MCF 10A (cell line): ENCODE measurements at regions of chr1 and their contacts with region 1.

Region 1: DNA sequence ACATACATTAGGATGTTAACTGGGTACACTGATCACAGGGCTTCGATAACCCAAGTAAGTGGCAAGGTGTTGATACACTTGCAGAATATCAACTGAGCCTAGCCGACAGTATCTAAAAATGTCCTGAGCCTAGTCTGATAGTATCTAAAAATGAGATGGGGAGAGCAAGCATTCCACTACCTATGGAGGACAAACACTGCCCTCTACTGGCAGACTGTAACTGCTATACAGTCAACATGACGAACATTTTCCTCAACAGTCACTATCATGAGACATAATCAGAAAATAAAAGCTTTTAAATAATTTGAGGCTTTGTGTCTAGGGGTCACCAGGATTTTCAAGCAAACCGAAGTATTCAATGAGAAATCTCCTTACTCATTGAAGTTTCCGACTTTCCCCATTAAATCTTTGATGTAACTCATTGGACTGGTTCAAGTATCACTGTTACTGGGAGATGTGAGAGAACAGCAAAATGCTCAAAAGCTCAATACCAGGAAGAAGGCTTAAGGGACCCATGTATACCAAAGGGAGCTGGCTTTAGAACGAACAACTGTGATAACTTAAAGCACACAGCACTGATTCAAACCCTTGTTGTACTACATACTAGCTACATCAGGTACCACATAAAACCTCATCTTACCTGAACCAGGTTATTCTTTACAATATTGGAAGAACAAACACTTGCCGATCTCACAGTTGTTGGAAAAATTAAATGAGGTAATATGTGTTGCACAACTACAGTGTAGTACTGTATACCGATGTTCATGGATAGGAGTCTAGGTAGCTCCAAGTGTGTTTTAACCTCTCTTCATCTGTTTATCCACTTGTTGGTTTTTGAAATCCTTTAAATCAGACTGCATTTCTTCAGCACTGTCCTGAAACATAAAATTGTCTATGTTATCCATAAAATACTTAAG is 31.1 kb upstream of the SLC45A3 start:
- DNase-seq: peak; percentile 93
- H3K4me3 Mint-ChIP-seq: no peak overlapping the region
- H3K27ac Mint-ChIP-seq: no peak overlapping the region
- H3K4me1 Mint-ChIP-seq: peaks cover 30% of the 10 kb centered on the region
- H3K27me3 Mint-ChIP-seq: no peaks in the 10 kb centered on the region
- CTCF ChIP-seq: peak; percentile 97

Region 2: DNA sequence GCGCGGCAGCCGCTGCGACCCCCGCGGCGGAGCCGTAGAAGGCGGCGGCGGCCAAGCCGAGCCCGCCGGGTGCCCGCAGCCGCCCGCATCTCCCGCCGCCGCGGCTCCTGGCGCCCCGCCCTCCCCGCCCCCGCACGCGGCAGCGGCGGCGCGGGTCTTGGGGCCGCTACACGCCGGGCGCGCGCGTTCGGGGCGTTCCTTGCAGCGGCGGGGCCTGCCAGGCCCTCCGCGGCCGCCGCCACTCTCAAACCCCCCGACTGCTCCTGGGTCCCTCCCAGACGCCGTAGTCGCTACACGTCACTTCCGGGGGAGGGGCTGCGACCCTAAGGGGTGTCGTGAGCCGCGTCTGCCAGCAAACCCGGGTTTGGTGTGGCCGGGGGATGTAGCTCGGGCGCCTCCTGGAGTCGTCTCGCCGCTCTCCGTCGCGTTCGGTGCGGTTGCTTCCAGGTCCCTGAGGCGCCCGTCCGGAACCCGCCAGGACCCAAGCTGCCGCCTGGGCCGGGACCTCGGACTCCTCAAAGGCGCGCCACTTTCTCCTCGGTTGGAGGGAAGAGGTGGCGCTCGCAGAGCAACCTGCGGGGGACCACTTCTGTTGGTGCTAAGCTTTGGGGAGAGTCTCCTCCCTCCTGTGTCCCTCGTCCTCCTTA is 79.5 kb before region 1 on chr1 and contains the start of gene ELK4:
- CTCF ChIA-PET with region 1: interaction called, 8 read pairs
- POLR2A ChIA-PET with region 1: interaction called, 12 read pairs
- intact Hi-C with region 1: no loop called
- DNase-seq: peak; percentile 100
- H3K4me3 Mint-ChIP-seq: peak within 1 kb of the TSS; percentile 90
- H3K27ac Mint-ChIP-seq: peak within 1 kb of the TSS; percentile 91
- H3K4me1 Mint-ChIP-seq: peaks cover 35% of the 10 kb centered on the region
- H3K27me3 Mint-ChIP-seq: no peaks in the 10 kb centered on the region
- CTCF ChIP-seq: peak; percentile 87
- total RNA-seq, gene ELK4: 101 and 109 TPM in 2 replicates

Region 3: GRCh38 chr1:205680073-205680851 is 31.1 kb before region 1 on chr1 and contains the start of gene SLC45A3:
- CTCF ChIA-PET with region 1: interaction called, 69 read pairs
- POLR2A ChIA-PET with region 1: interaction called, 25 read pairs
- intact Hi-C with region 1: no loop called
- DNase-seq: no peak
- H3K4me3 Mint-ChIP-seq: peak within 1 kb of the TSS; percentile 76
- H3K27ac Mint-ChIP-seq: peak within 1 kb of the TSS; percentile 5
- H3K4me1 Mint-ChIP-seq: peaks cover 14% of the 10 kb centered on the region
- H3K27me3 Mint-ChIP-seq: no peaks in the 10 kb centered on the region
- CTCF ChIP-seq: no peak
- total RNA-seq, gene SLC45A3: 3.1 and 5.3 TPM in 2 replicates

Region 4: DNA sequence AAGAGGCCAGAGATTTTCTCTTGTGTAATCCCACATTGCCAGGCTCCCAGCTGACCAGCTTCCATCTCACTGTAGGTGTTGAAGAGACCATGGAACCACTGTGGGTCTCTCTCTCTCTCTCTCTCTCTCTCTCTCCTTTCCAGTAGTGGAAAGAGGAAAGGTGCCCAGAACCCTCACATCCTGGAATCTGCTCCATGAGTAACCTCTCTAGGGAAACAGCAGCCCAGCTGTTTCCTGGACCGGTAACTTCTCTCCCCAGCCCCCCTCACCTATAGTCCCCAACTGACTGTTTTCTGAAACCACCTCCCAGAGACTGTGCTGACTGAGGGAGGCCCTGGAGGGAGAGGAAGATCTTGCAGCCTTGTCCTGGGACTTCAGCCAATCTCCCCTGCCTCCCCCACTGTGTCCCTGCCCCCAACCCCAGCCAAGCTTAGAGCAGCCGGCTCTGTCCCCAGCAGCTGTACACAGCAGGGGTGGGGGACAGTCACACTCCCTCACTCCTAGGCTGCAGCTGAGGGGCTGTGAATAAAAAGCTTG is 10.4 kb before region 1 on chr1:
- CTCF ChIA-PET with region 1: interaction called, 129 read pairs
- POLR2A ChIA-PET with region 1: interaction called, 11 read pairs
- intact Hi-C with region 1: no loop called
- DNase-seq: peak; percentile 33
- H3K4me3 Mint-ChIP-seq: no peak overlapping the region
- H3K27ac Mint-ChIP-seq: no peak overlapping the region
- H3K4me1 Mint-ChIP-seq: peaks cover 6% of the 10 kb centered on the region
- H3K27me3 Mint-ChIP-seq: no peaks in the 10 kb centered on the region
- CTCF ChIP-seq: no peak

Region 5: GRCh38 chr1:205739348-205740160 is 28.2 kb after region 1 on chr1:
- CTCF ChIA-PET with region 1: interaction called, 23 read pairs
- POLR2A ChIA-PET with region 1: interaction called, 9 read pairs
- intact Hi-C with region 1: no loop called
- DNase-seq: peak; percentile 85
- H3K4me3 Mint-ChIP-seq: no peak overlapping the region
- H3K27ac Mint-ChIP-seq: peak overlapping the region; percentile 3
- H3K4me1 Mint-ChIP-seq: peaks cover 23% of the 10 kb centered on the region
- H3K27me3 Mint-ChIP-seq: no peaks in the 10 kb centered on the region
- CTCF ChIP-seq: peak; percentile 48

Region 6: DNA sequence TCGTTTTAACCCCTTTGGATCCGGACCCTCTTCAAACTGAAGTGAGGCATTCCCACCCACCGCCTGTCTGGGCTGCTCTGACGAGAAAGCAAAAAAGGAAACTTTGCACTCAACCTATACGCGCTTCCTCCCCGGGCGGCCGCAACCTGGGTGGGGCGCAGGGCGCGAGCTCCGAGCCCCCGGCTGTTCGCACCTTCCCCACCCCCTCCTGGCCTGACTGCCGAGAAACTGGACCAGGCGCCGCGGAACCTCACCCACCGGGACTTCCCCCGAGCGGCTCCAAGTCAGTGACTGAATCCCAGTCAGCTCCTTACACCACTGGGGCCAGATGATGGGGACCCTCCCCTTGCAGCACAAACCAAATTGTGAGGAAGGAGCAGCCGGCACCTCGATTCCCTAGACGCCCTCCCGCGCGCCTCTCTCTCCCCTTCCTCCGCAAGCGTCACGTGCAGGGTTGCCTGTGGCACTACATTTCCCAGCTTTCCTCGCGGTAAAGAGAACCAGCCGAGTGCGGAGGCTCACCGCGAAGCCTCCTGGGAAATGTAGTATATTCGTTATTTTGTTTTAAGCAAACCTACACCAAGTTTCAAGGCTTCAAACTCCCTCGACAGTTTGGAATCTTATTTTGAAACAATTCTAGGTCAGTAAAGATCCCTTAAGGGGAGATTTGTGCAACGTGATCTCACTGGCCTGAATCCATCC is 63.8 kb after region 1 on chr1 and contains the start of gene RAB29:
- CTCF ChIA-PET with region 1: interaction called, 7 read pairs
- POLR2A ChIA-PET with region 1: interaction called, 7 read pairs
- intact Hi-C with region 1: loop called (anchors 2 kb)
- DNase-seq: peak; percentile 95
- H3K4me3 Mint-ChIP-seq: peak within 1 kb of the TSS; percentile 88
- H3K27ac Mint-ChIP-seq: peak within 1 kb of the TSS; percentile 89
- H3K4me1 Mint-ChIP-seq: peaks cover 31% of the 10 kb centered on the region
- H3K27me3 Mint-ChIP-seq: no peaks in the 10 kb centered on the region
- CTCF ChIP-seq: no peak
- total RNA-seq, gene RAB29: 33.6 and 44.8 TPM in 2 replicates